ENCODE measurements at regions of chr3 and their contacts with region 1.

Region 1: DNA sequence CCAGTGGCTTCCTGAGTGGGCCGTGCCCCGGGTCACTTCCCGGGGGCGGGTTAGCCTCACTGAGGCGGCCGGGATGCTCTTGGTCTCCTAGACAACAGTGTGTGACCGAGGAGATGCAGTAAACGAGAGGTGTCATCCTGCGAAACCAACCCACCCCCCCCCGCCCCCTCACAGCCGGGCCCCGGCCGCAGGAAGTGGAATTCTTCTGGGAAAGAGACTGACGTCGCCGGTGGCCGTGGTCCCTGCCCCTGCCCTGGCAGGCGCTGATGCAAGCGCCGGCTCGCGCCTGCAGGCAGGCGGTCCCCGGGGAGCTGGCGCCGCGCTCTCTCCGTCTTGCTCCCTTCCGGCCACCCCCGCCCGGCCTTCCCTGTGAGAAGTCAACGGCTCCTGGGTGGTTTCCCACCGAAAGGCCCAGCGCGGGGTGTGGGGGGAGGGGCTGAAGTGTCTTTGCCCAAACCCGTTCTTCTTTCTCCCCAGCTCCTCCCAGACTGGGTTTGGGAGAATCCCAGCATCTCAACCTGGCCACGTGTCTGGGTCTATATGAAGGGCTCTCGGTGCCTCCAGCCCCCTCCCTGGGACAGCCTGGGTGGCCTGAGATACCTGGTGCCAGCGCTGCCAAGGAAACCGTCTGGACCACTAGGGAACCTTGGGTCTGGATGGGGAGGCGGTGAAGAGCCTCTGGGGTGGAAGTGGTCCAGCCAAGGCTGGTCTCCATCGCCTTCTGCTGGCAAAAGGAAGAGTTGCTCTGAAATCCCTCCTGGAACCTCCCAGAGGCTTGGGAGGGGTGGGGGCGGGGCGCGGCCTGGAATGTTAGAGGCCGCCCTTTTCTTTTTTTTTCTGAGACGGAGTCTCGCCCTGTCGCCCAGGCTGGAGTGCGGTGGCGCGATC is 47.3 kb downstream of the BHLHE40 start:
- DNase-seq: peak; percentile 84
- H3K4me3 Mint-ChIP-seq: peak overlapping the region; percentile 69
- H3K27ac Mint-ChIP-seq: peak overlapping the region; percentile 96
- H3K4me1 Mint-ChIP-seq: peaks cover 28% of the 10 kb centered on the region
- H3K27me3 Mint-ChIP-seq: no peaks in the 10 kb centered on the region
- CTCF ChIP-seq: no peak

Region 2: GRCh38 chr3:4986782-4987537 is 39.6 kb before region 1 on chr3:
- CTCF ChIA-PET with region 1: interaction called, 10 read pairs
- intact Hi-C with region 1: loop called (anchors 1 kb)
- DNase-seq: peak; percentile 97
- H3K4me3 Mint-ChIP-seq: peak overlapping the region; percentile 76
- H3K27ac Mint-ChIP-seq: peak overlapping the region; percentile 97
- H3K4me1 Mint-ChIP-seq: peaks cover 34% of the 10 kb centered on the region
- H3K27me3 Mint-ChIP-seq: no peaks in the 10 kb centered on the region
- CTCF ChIP-seq: no peak

Measured in Calu3 (cell line).